ENCODE measurements at regions of chr3 and their contacts with region 1.

Region 1: GRCh38 chr3:21592828-21593227 is 158.2 kb downstream of the ZNF385D start:
- DNase-seq: no peak
- ATAC-seq: no peak
- H3K4me3 ChIP-seq: no peak overlapping the region
- H3K27ac ChIP-seq: no peak overlapping the region
- H3K4me1 ChIP-seq: no peaks in the 10 kb centered on the region
- H3K27me3 ChIP-seq: no peaks in the 10 kb centered on the region
- CTCF ChIP-seq: no peak
- EP300 ChIP-seq: no peak
- POLR2A ChIP-seq: no peak
- RAD21 ChIP-seq: no peak

Region 2: GRCh38 chr3:21551019-21551418 is 41.8 kb before region 1 on chr3:
- CTCF ChIA-PET with region 1: no interaction called
- POLR2A ChIA-PET with region 1: no interaction called
- in situ Hi-C with region 1: no loop called
- intact Hi-C with region 1: loop called (anchors 1 kb)
- DNase-seq: peak; percentile 1
- ATAC-seq: peak; percentile 49; the same call in 2 of the 3 replicates
- H3K4me3 ChIP-seq: no peak overlapping the region
- H3K27ac ChIP-seq: no peak overlapping the region
- H3K4me1 ChIP-seq: no peaks in the 10 kb centered on the region
- H3K27me3 ChIP-seq: no peaks in the 10 kb centered on the region; a peak in 1 of 5 replicates
- CTCF ChIP-seq: peak; percentile 47
- EP300 ChIP-seq: no peak
- POLR2A ChIP-seq: no peak
- RAD21 ChIP-seq: no peak